CD4-positive, alpha-beta T cell (primary cell): ENCODE measurements at regions of chr12 and their contacts with region 1.

Region 1: GRCh38 chr12:110600254-110600653 is 13.7 kb upstream of the TCTN1 start:
- DNase-seq: peak in 3 of 14 experiments; percentile 70 to 76 (median 74)
- ATAC-seq: peak; percentile 46
- H3K4me3 ChIP-seq: no peak overlapping the region
- H3K4me3 Mint-ChIP-seq: no peak overlapping the region
- H3K27ac ChIP-seq: no peak overlapping the region
- H3K27ac Mint-ChIP-seq: peak overlapping the region; percentile 0
- H3K4me1 ChIP-seq: peaks cover 5% of the 10 kb centered on the region
- H3K4me1 Mint-ChIP-seq: peaks cover 10% of the 10 kb centered on the region
- H3K27me3 ChIP-seq: no peaks in the 10 kb centered on the region
- H3K27me3 Mint-ChIP-seq: no peaks in the 10 kb centered on the region
- CTCF ChIP-seq: peak; percentile 71

Region 2: GRCh38 chr12:110508071-110508586 is 92.1 kb before region 1 on chr12:
- CTCF ChIA-PET with region 1: interaction called, 9 read pairs
- POLR2A ChIA-PET with region 1: interaction called, 3 read pairs
- intact Hi-C with region 1: loop called (anchors 1 to 2 kb)
- DNase-seq: no peak
- ATAC-seq: no peak
- H3K4me3 ChIP-seq: no peak overlapping the region
- H3K4me3 Mint-ChIP-seq: no peak overlapping the region
- H3K27ac ChIP-seq: no peak overlapping the region
- H3K27ac Mint-ChIP-seq: no peak overlapping the region
- H3K4me1 ChIP-seq: no peaks in the 10 kb centered on the region
- H3K4me1 Mint-ChIP-seq: no peaks in the 10 kb centered on the region
- H3K27me3 ChIP-seq: no peaks in the 10 kb centered on the region
- H3K27me3 Mint-ChIP-seq: no peaks in the 10 kb centered on the region
- CTCF ChIP-seq: no peak

Region 3: GRCh38 chr12:110548678-110549077 is 51.6 kb before region 1 on chr12:
- CTCF ChIA-PET with region 1: interaction called, 112 read pairs
- POLR2A ChIA-PET with region 1: interaction called, 23 read pairs
- intact Hi-C with region 1: loop called (anchors 1 kb)
- DNase-seq: no peak
- ATAC-seq: no peak
- H3K4me3 ChIP-seq: no peak overlapping the region
- H3K4me3 Mint-ChIP-seq: no peak overlapping the region
- H3K27ac ChIP-seq: no peak overlapping the region
- H3K27ac Mint-ChIP-seq: no peak overlapping the region
- H3K4me1 ChIP-seq: peaks cover 7% of the 10 kb centered on the region
- H3K4me1 Mint-ChIP-seq: peaks cover 39% of the 10 kb centered on the region
- H3K27me3 ChIP-seq: no peaks in the 10 kb centered on the region
- H3K27me3 Mint-ChIP-seq: no peaks in the 10 kb centered on the region
- CTCF ChIP-seq: no peak

Region 4: GRCh38 chr12:110577717-110578521 is 22.3 kb before region 1 on chr12:
- CTCF ChIA-PET with region 1: interaction called, 12 read pairs
- POLR2A ChIA-PET with region 1: interaction called, 3 read pairs
- intact Hi-C with region 1: no loop called
- DNase-seq: peak in 6 of 14 experiments; percentile 19 to 83 (median 52)
- ATAC-seq: peak; percentile 27
- H3K4me3 ChIP-seq: peak overlapping the region; percentile 13
- H3K4me3 Mint-ChIP-seq: peak overlapping the region; percentile 96
- H3K27ac ChIP-seq: peak overlapping the region; percentile 67 to 79
- H3K27ac Mint-ChIP-seq: peak overlapping the region; percentile 92
- H3K4me1 ChIP-seq: peaks cover 51% of the 10 kb centered on the region
- H3K4me1 Mint-ChIP-seq: peaks cover 80% of the 10 kb centered on the region
- H3K27me3 ChIP-seq: no peaks in the 10 kb centered on the region
- H3K27me3 Mint-ChIP-seq: no peaks in the 10 kb centered on the region
- CTCF ChIP-seq: no peak

Region 5: GRCh38 chr12:110698171-110698902 is 98.1 kb after region 1 on chr12:
- CTCF ChIA-PET with region 1: no interaction called
- POLR2A ChIA-PET with region 1: interaction called, 3 read pairs
- intact Hi-C with region 1: loop called in 1 of 2 experiments (anchors 5 kb)
- DNase-seq: peak; percentile 66 to 90 (median 73)
- ATAC-seq: peak; percentile 100
- H3K4me3 ChIP-seq: no peak overlapping the region
- H3K4me3 Mint-ChIP-seq: no peak overlapping the region
- H3K27ac ChIP-seq: no peak overlapping the region
- H3K27ac Mint-ChIP-seq: peak overlapping the region; percentile 21
- H3K4me1 ChIP-seq: peaks cover 10% of the 10 kb centered on the region
- H3K4me1 Mint-ChIP-seq: peaks cover 17% of the 10 kb centered on the region
- H3K27me3 ChIP-seq: no peaks in the 10 kb centered on the region
- H3K27me3 Mint-ChIP-seq: no peaks in the 10 kb centered on the region
- CTCF ChIP-seq: peak; percentile 86